ENCODE measurements at regions of chrX and their contacts with region 1.

Region 1: DNA sequence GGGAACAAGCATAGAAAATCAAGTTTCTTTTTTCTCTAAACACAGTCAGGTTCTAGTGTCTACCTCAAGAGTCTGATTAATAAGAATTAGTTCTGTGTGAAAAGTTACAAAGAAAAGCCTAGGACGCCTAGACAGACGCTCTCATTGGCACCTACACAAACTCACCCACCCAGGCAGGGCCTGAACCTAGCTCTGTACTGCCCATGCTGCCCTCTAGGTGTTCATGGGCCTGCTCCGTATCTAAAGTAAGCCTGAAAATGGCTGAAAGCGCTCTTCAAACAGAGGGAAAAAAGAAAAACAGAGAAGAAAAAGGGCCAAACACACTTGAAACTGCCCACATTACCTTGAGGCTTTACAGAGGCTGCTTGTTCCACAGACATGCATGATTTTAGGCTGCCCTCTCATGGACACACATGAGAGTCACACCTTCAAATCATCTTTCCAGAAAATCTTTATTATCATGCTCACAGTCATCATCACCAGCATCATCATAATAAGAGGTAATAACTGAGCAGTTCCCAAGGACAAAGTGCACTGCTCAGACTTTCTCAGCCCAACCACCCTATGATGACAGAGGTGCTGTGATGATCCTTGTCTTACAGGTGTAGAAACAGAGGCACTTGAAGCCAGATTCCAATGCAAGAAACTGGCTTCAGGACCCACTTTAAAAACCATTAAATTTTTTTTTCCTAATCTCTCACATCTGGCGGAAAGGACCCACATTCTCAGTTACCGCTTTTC is 49.6 kb downstream of the MAP7D2 start:
- DNase-seq: no peak
- ATAC-seq: peak; percentile 69
- H3K4me3 Mint-ChIP-seq: no peak overlapping the region
- H3K27ac Mint-ChIP-seq: no peak overlapping the region
- H3K4me1 Mint-ChIP-seq: peaks cover 4% of the 10 kb centered on the region; the same call in 1 of the 2 replicates
- H3K27me3 Mint-ChIP-seq: no peaks in the 10 kb centered on the region
- CTCF ChIP-seq: no peak

Region 2: DNA sequence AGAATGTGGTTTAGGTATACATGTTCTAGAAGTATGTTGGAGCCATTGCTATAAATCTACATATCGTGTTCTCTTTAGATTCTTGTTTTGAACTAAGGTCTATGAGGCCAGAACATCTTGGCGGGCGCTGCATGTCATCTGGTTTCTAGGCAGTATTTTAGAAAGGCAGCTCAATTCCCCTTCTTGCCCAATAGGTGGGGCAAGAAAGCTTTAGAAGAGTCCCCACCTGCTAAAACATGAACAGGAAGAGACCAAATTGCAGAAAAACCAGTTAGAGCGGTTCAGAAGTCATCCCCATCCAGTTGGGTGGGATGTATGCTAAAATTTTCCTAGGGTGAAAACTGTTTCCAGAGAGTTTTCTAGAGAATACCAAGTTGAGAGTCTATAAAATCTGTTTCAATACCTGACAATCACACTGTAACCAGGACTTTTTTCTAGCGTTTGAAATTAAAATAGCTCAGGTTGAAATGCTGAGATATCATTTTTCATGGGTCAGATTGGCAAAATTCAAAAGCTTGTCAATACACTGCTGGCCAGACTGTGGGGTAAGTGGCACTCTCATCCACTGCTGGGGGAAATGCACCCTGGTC is 162.3 kb before region 1 on chrX:
- CTCF ChIA-PET with region 1: interaction called, 12 read pairs
- POLR2A ChIA-PET with region 1: no interaction called
- DNase-seq: no peak
- ATAC-seq: peak; percentile 79
- H3K4me3 Mint-ChIP-seq: no peak overlapping the region
- H3K27ac Mint-ChIP-seq: no peak overlapping the region
- H3K4me1 Mint-ChIP-seq: peaks cover 10% of the 10 kb centered on the region
- H3K27me3 Mint-ChIP-seq: no peaks in the 10 kb centered on the region; the same call in 1 of the 2 replicates
- CTCF ChIP-seq: no peak